ENCODE measurements at regions of chr17 and their contacts with region 1.

Region 1: GRCh38 chr17:7745748-7746470 is 28.4 kb downstream of the DNAH2 start:
- DNase-seq: peak in 1 of 10 donors; percentile 3
- H3K4me3 ChIP-seq: no peak overlapping the region
- H3K27ac ChIP-seq: no peak overlapping the region
- H3K27me3 ChIP-seq: peaks cover 0 to 5% (median 0%) of the 10 kb centered on the region in 45 donors
- CTCF ChIP-seq: no peak

Region 2: GRCh38 chr17:7711051-7711755 is 34.7 kb before region 1 on chr17:
- intact Hi-C with region 1: no loop called
- DNase-seq: no peak
- H3K4me3 ChIP-seq: no peak overlapping the region
- H3K27ac ChIP-seq: no peak overlapping the region
- H3K27me3 ChIP-seq: peaks cover 0 to 22% (median 0%) of the 10 kb centered on the region in 45 donors
- CTCF ChIP-seq: peak in 2 of 56 donors; percentile 20 to 22

Region 3: GRCh38 chr17:7803981-7804380 is 58.1 kb after region 1 on chr17:
- intact Hi-C with region 1: loop called in 1 of 2 experiments (anchors 10 kb)
- DNase-seq: no peak
- H3K4me3 ChIP-seq: no peak overlapping the region
- H3K27ac ChIP-seq: no peak overlapping the region
- H3K27me3 ChIP-seq: peaks cover 0 to 5% (median 0%) of the 10 kb centered on the region in 45 donors
- CTCF ChIP-seq: no peak